K562 (cell line): ENCODE measurements at regions of chr4 and their contacts with region 1.

Region 1: GRCh38 chr4:26459054-26459755 is 31.1 kb downstream of the CCKAR start:
- DNase-seq: peak; percentile 40 to 53 (median 48)
- ATAC-seq: peak; percentile 84
- H3K4me3 ChIP-seq: no peak overlapping the region
- H3K27ac ChIP-seq: no peak overlapping the region
- H3K4me1 ChIP-seq: no peaks in the 10 kb centered on the region
- H3K27me3 ChIP-seq: peaks cover 4 to 16% of the 10 kb centered on the region in 2 experiments; a peak in 4 of 5 replicates
- CTCF ChIP-seq: peak; percentile 38 to 68 (median 61); a peak in 5 of 6 replicates
- EP300 ChIP-seq: no peak
- POLR2A ChIP-seq: no peak
- RAD21 ChIP-seq: peak; percentile 77 to 81

Region 2: DNA sequence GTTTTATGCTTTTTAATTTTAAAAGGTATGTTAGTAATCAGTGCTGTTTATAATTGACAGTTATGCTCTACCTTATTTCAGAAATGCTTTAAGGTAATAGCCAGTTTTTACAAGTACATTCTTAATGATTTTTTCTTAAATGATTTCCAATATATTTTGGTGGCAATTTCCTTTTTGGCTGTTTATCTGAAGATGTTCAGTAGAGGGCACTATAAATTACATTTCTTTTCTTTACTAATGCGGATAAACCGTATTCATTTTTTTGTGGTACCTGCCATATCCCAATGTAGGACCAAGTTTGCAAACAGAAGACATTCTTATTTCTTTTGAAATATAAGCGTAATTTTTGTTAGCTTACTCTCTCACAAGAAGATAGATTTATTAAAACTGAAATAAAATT is 34.4 kb before region 1 on chr4:
- CTCF ChIA-PET with region 1: no interaction called
- POLR2A ChIA-PET with region 1: no interaction called
- in situ Hi-C with region 1: no loop called
- intact Hi-C with region 1: no loop called
- DNase-seq: no peak
- ATAC-seq: no peak
- H3K4me3 ChIP-seq: no peak overlapping the region
- H3K27ac ChIP-seq: no peak overlapping the region
- H3K4me1 ChIP-seq: no peaks in the 10 kb centered on the region
- H3K27me3 ChIP-seq: no peaks in the 10 kb centered on the region
- CTCF ChIP-seq: 0 out of 6 replicates have a peak, but pooled peaks of 1 of the 3 experiments have one; percentile 6
- EP300 ChIP-seq: no peak
- POLR2A ChIP-seq: no peak
- RAD21 ChIP-seq: no peak

Region 3: GRCh38 chr4:26709246-26709645 is 250.0 kb after region 1 on chr4:
- CTCF ChIA-PET with region 1: no interaction called
- POLR2A ChIA-PET with region 1: no interaction called
- in situ Hi-C with region 1: loop called (anchors 5 kb)
- intact Hi-C with region 1: no loop called
- DNase-seq: no peak
- ATAC-seq: no peak
- H3K4me3 ChIP-seq: no peak overlapping the region
- H3K27ac ChIP-seq: no peak overlapping the region
- H3K4me1 ChIP-seq: no peaks in the 10 kb centered on the region
- H3K27me3 ChIP-seq: no peaks in the 10 kb centered on the region
- CTCF ChIP-seq: no peak
- EP300 ChIP-seq: no peak
- POLR2A ChIP-seq: no peak
- RAD21 ChIP-seq: no peak

Region 4: GRCh38 chr4:26854701-26855100 is 395.5 kb after region 1 on chr4:
- CTCF ChIA-PET with region 1: no interaction called
- POLR2A ChIA-PET with region 1: no interaction called
- in situ Hi-C with region 1: no loop called
- intact Hi-C with region 1: no loop called
- DNase-seq: no peak
- ATAC-seq: no peak
- H3K4me3 ChIP-seq: no peak overlapping the region
- H3K27ac ChIP-seq: no peak overlapping the region
- H3K4me1 ChIP-seq: peaks cover 7 to 9% of the 10 kb centered on the region in 2 experiments; a peak in 4 of 5 replicates
- H3K27me3 ChIP-seq: no peaks in the 10 kb centered on the region
- CTCF ChIP-seq: no peak
- EP300 ChIP-seq: no peak
- POLR2A ChIP-seq: no peak
- RAD21 ChIP-seq: no peak